ENCODE measurements at regions of chr3 and their contacts with region 1.

Region 1: GRCh38 chr3:106176734-106177133 is 307.9 kb upstream of the CBLB start:
- DNase-seq: peak; percentile 72
- H3K4me3 Mint-ChIP-seq: peak overlapping the region; percentile 57
- H3K27ac Mint-ChIP-seq: peak overlapping the region; percentile 91
- H3K4me1 Mint-ChIP-seq: peaks cover 59% of the 10 kb centered on the region
- H3K27me3 Mint-ChIP-seq: no peaks in the 10 kb centered on the region

Region 2: DNA sequence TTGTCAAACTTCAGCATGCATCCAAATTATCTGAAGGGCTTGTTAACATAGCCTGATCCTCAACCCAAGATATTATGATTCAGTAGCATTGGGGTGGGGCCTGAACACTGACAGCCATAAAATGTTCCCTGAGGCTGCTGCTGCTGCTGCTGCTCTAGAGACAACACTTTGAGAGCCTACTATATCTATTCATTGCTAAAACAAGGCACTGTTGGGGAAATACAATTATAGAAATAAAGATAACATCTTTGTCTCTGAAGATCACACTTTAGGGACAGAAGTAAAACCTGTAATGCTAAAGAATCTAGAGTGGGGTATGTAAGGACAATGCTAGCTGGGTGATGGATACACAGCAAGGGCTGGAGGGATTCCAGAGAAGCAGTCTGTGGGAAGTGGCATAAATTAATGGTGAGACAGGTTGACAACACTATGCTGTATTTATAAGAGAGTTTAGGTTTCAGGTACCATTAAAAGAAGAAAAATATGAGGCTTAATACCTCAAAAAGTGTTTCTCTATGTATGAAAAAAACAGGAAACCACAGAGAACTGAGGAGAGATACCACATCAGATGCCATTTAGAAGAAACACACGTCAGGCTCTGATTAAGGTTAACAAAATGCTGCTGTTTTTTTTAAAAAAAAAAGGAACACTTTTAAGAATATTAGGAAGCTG is 423.9 kb before region 1 on chr3:
- intact Hi-C with region 1: loop called (anchors 2 kb)
- DNase-seq: peak; percentile 39
- H3K4me3 Mint-ChIP-seq: peak overlapping the region; percentile 48
- H3K27ac Mint-ChIP-seq: peak overlapping the region; percentile 95
- H3K4me1 Mint-ChIP-seq: peaks cover 70% of the 10 kb centered on the region
- H3K27me3 Mint-ChIP-seq: no peaks in the 10 kb centered on the region

Region 3: GRCh38 chr3:106068795-106069194 is 107.9 kb before region 1 on chr3:
- intact Hi-C with region 1: loop called (anchors 2 kb)
- DNase-seq: no peak
- H3K4me3 Mint-ChIP-seq: no peak overlapping the region
- H3K27ac Mint-ChIP-seq: peak overlapping the region; percentile 83
- H3K4me1 Mint-ChIP-seq: peaks cover 15% of the 10 kb centered on the region
- H3K27me3 Mint-ChIP-seq: no peaks in the 10 kb centered on the region

Region 4: DNA sequence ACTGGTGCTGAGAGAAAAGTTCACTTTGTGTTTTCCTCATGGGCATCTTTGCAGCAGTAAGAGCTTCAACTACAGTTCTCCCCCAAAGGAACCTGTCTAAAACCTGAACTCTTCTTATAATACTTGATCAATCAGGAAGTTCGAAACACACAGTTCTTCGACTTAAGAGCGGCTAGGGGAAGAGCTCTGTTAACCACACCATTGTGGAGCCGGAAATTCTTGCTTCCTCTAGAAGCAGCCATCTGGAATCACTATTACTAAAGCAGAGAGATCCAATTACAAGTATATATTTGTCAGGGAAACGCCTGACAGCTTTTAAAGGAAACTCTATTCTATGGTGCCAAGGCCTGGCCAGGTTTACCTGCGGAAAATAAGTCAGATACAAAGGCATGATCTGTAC is 29.4 kb after region 1 on chr3:
- intact Hi-C with region 1: loop called (anchors 1 kb)
- DNase-seq: no peak
- H3K4me3 Mint-ChIP-seq: peak overlapping the region; percentile 43
- H3K27ac Mint-ChIP-seq: peak overlapping the region; percentile 86
- H3K4me1 Mint-ChIP-seq: peaks cover 46% of the 10 kb centered on the region
- H3K27me3 Mint-ChIP-seq: no peaks in the 10 kb centered on the region

Region 5: DNA sequence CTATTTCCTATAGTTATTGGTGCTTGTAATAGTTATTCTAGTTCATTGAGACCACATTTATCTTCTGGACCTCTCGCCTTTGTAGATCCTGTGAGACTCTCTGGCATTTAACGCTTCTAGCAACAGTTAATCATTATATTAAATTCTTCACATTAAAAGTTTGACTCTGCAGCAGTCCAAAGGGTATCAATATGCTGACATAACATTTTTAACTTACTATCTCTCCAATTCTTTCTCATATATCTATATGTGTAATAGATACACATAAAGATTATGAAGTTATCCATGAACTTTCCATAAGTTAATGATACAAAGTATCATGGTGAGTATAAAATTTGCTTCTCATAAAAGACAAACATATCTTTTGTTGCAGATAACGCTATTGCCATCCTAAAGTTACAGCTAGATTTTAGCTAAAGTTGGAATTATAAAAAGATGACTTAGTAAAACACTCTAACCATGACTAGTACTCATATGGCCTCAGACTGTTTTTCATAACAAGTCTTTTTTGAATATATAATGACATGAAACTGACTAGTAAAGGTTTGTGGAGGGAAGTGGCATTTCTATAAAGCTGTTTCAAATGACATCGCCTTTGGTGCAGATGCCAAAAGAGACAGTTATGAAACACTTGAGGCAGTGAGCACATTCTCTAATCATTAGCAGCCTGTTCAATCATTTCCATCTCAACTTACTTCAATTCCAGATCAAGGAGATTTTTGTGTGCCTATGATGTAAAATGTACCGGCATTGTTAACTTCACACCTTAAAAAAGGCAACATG is 71.4 kb after region 1 on chr3:
- intact Hi-C with region 1: loop called (anchors 5 kb)
- DNase-seq: no peak
- H3K4me3 Mint-ChIP-seq: no peak overlapping the region
- H3K27ac Mint-ChIP-seq: no peak overlapping the region
- H3K4me1 Mint-ChIP-seq: peaks cover 15% of the 10 kb centered on the region
- H3K27me3 Mint-ChIP-seq: no peaks in the 10 kb centered on the region

Region 6: GRCh38 chr3:106609666-106610301 is 433.1 kb after region 1 on chr3:
- intact Hi-C with region 1: loop called (anchors 5 kb)
- DNase-seq: peak; percentile 41
- H3K4me3 Mint-ChIP-seq: no peak overlapping the region
- H3K27ac Mint-ChIP-seq: peak overlapping the region; percentile 73
- H3K4me1 Mint-ChIP-seq: peaks cover 26% of the 10 kb centered on the region
- H3K27me3 Mint-ChIP-seq: no peaks in the 10 kb centered on the region

Measured in activated T-helper 2 cell treated with anti-CD3 and anti-CD28 coated beads, Interferon-gamma antibody, Interleukin-2, Interleukin-4, amounts not matched to agents 10 μg/mL and 5 μg/mL and 100 μg/mL, durations not matched to agents 14 hours and 24 hours and 36 hours (primary cell).